ENCODE measurements at regions of chr6 and their contacts with region 1.

Region 1: DNA sequence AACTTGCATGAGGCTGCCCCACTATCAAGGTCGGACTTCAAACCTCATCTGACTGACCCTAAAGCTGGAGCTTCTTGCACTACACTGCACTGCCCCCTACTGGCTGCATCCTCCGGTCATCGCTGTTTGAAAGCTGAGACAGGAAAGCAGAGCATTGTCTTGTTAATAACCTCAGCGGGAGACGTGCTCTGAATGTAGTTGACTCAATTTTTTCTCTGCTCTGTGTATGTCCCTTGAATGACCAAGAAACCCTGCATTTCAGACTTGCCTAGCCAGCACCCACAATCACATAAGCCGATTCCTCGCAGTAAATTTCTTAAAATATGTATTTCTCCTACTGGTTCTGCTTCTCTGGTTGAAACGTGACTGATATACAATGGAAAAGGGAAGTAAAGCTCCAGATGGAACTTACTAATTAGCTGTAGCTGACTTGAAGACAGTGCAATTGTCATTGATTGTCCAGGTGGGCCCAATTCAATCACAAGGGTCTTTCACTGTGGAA is 27.8 kb downstream of the TCF21 start:
- DNase-seq: peak; percentile 84
- ATAC-seq: peak; percentile 61
- H3K4me3 Mint-ChIP-seq: no peak overlapping the region
- H3K27ac Mint-ChIP-seq: no peak overlapping the region
- H3K4me1 Mint-ChIP-seq: peaks cover 8% of the 10 kb centered on the region
- H3K27me3 Mint-ChIP-seq: peaks cover 36% of the 10 kb centered on the region

Region 2: GRCh38 chr6:133568970-133569889 is 347.5 kb before region 1 on chr6:
- CTCF ChIA-PET with region 1: interaction called, 14 read pairs
- DNase-seq: peak; percentile 46
- ATAC-seq: peak; percentile 53
- H3K4me3 Mint-ChIP-seq: peak overlapping the region; percentile 27
- H3K27ac Mint-ChIP-seq: no peak overlapping the region
- H3K4me1 Mint-ChIP-seq: peaks cover 3% of the 10 kb centered on the region
- H3K27me3 Mint-ChIP-seq: peaks cover 23% of the 10 kb centered on the region

Region 3: DNA sequence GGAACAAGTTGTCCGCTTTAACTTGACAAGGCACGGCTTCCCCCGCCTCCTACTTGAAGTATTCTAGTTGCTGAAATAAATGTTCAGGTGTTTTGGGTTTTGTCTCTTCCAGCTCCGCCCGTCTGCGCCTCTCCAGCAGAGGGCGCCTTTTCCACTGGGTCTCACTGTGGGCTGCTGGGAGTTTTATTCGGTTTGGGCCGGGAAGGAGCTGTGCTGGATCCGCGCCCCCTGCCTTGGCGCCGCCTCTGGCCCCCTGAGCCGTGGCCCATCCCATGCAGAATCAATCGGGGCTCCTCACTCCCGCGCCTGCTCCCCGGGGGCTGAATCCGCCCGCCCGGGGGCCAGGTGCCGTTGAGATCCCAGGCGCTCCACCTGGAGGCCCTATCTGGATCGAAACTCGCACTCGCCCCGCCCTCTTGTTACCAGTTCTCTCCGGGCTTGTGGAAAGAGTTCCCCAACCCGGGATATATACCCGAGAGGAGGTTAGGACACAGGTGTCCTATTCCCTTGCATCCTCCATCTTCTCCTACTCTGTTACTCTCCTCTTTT is 78.8 kb before region 1 on chr6:
- CTCF ChIA-PET with region 1: interaction called, 66 read pairs
- DNase-seq: peak; percentile 70
- ATAC-seq: peak; percentile 78
- H3K4me3 Mint-ChIP-seq: peak overlapping the region; percentile 43
- H3K27ac Mint-ChIP-seq: no peak overlapping the region
- H3K4me1 Mint-ChIP-seq: peaks cover 6% of the 10 kb centered on the region
- H3K27me3 Mint-ChIP-seq: peaks cover 22% of the 10 kb centered on the region

Region 4: DNA sequence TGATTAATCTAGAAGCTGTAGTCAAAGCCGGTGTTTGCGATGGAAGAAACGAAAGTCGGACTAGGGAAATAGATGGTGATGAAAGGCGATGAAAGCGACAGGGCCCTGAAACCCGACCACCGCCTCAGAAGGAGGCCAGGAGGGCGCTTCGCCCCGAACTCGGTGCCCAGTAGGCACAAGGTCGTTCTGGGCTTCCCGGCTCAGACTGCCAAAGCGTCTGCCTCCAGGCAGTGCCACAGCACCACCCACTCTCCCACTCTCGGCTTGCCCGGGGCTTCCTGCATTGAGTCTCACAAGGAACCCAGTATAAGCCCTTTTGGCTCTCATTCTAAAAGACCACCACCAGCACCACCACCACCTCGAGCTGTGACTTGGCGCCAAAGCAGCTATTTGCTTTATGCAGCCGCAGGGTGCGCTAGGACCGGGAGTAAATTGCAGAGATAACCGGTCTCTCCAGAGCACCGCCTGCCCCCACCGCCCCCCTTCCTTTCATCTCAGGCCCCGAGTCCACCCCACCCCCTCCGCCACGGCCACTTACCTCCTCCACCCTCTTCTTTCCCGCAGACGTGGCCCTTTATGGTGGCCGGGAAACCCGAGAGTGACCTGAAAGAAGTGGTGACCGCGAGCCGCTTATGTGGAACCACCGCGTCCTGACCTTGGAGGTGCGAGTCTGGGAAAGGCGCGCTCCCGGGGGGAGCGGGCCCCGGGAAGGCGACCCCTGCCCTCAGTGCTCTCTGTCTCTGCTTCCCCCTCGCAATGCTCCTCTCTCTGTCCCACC is 25.4 kb before region 1 on chr6:
- CTCF ChIA-PET with region 1: interaction called, 16 read pairs
- DNase-seq: peak; percentile 43
- ATAC-seq: peak; percentile 55
- H3K4me3 Mint-ChIP-seq: peak overlapping the region; percentile 70
- H3K27ac Mint-ChIP-seq: no peak overlapping the region
- H3K4me1 Mint-ChIP-seq: peaks cover 24% of the 10 kb centered on the region
- H3K27me3 Mint-ChIP-seq: peaks cover 97% of the 10 kb centered on the region

Region 5: GRCh38 chr6:133899556-133899955 is 17.1 kb before region 1 on chr6:
- CTCF ChIA-PET with region 1: interaction called, 11 read pairs
- DNase-seq: no peak
- ATAC-seq: no peak
- H3K4me3 Mint-ChIP-seq: no peak overlapping the region
- H3K27ac Mint-ChIP-seq: no peak overlapping the region
- H3K4me1 Mint-ChIP-seq: no peaks in the 10 kb centered on the region
- H3K27me3 Mint-ChIP-seq: peaks cover 69% of the 10 kb centered on the region

Region 6: GRCh38 chr6:134063966-134064445 is 147.3 kb after region 1 on chr6:
- CTCF ChIA-PET with region 1: interaction called, 85 read pairs
- DNase-seq: peak; percentile 66
- ATAC-seq: peak; percentile 91
- H3K4me3 Mint-ChIP-seq: no peak overlapping the region
- H3K27ac Mint-ChIP-seq: no peak overlapping the region
- H3K4me1 Mint-ChIP-seq: no peaks in the 10 kb centered on the region
- H3K27me3 Mint-ChIP-seq: peaks cover 2% of the 10 kb centered on the region

Region 7: GRCh38 chr6:134097114-134097707 is 180.5 kb after region 1 on chr6:
- CTCF ChIA-PET with region 1: interaction called, 205 read pairs
- DNase-seq: peak; percentile 74
- ATAC-seq: no peak
- H3K4me3 Mint-ChIP-seq: no peak overlapping the region
- H3K27ac Mint-ChIP-seq: no peak overlapping the region
- H3K4me1 Mint-ChIP-seq: peaks cover 7% of the 10 kb centered on the region
- H3K27me3 Mint-ChIP-seq: peaks cover 27% of the 10 kb centered on the region